Activated CD4-positive, alpha-beta memory T cell treated with anti-CD3 and anti-CD28 coated beads for 36 hours (primary cell): ENCODE measurements at regions of chr1 and their contacts with region 1.

Region 1: GRCh38 chr1:36149237-36149972 is at the start of gene TRAPPC3:
- DNase-seq: peak; percentile 100
- H3K4me3 Mint-ChIP-seq: peak within 1 kb of the TSS; percentile 100
- H3K27ac Mint-ChIP-seq: peak within 1 kb of the TSS; percentile 92
- H3K4me1 Mint-ChIP-seq: peaks cover 67% of the 10 kb centered on the region
- H3K27me3 Mint-ChIP-seq: no peaks in the 10 kb centered on the region
- total RNA-seq, gene TRAPPC3: 56.7 to 56.8 TPM

Region 2: GRCh38 chr1:36115200-36115669 is 34.2 kb before region 1 on chr1:
- CTCF ChIA-PET with region 1: no interaction called
- POLR2A ChIA-PET with region 1: no interaction called
- intact Hi-C with region 1: no loop called
- DNase-seq: no peak
- H3K4me3 Mint-ChIP-seq: no peak overlapping the region
- H3K27ac Mint-ChIP-seq: no peak overlapping the region
- H3K4me1 Mint-ChIP-seq: peaks cover 5% of the 10 kb centered on the region
- H3K27me3 Mint-ChIP-seq: no peaks in the 10 kb centered on the region

Region 3: GRCh38 chr1:36134505-36135329 is 14.7 kb before region 1 on chr1:
- CTCF ChIA-PET with region 1: interaction called, 23 read pairs
- POLR2A ChIA-PET with region 1: interaction called, 4 read pairs
- intact Hi-C with region 1: no loop called
- DNase-seq: peak; percentile 57
- H3K4me3 Mint-ChIP-seq: no peak overlapping the region
- H3K27ac Mint-ChIP-seq: no peak overlapping the region
- H3K4me1 Mint-ChIP-seq: peaks cover 3% of the 10 kb centered on the region
- H3K27me3 Mint-ChIP-seq: no peaks in the 10 kb centered on the region

Region 4: DNA sequence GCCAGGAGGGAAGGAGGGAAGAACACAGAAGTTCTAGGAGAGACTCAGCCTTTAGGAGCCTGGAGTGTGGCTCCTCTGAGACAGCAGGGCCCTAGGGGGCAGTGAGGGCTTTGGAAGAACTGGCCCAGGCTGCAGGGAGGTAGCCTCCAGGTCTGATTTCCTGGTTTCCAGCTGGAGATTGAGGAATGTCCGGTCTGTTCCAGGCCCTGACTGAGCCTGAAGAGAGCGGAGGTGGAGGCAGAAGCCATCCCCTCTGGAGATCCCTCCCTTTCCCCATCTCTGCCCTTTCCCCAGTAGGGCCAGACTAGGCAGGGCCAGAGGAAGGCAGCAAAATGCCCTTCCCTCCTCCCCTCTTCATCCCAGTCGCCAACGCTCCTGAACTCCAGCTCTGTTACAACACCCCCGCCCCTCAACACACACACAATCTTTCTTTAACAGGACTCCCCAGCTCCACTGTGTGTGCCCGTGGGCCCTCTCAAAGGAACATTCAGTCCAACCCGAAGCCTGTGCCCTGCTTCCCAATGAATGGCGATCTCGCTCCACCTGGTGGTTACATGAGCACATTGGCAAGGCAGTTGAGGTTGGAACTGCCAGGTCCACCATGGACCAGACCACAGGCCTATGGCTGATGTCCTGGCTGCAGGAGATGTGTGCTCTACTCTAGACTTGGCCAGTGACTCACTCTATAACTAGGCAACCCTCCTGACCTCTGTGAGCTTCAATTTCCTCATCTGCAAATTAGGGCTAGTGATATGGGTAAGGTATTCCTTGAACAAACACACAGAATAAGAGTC is 38.6 kb after region 1 on chr1:
- CTCF ChIA-PET with region 1: interaction called, 151 read pairs
- POLR2A ChIA-PET with region 1: interaction called, 12 read pairs
- intact Hi-C with region 1: loop called (anchors 1 kb)
- DNase-seq: peak; percentile 89
- H3K4me3 Mint-ChIP-seq: no peak overlapping the region
- H3K27ac Mint-ChIP-seq: peak overlapping the region; percentile 55
- H3K4me1 Mint-ChIP-seq: peaks cover 4% of the 10 kb centered on the region
- H3K27me3 Mint-ChIP-seq: no peaks in the 10 kb centered on the region

Region 5: GRCh38 chr1:36285448-36286101 is 136.2 kb after region 1 on chr1:
- CTCF ChIA-PET with region 1: interaction called, 54 read pairs
- POLR2A ChIA-PET with region 1: interaction called, 3 read pairs
- intact Hi-C with region 1: loop called (anchors 1 kb)
- DNase-seq: peak; percentile 68
- H3K4me3 Mint-ChIP-seq: no peak overlapping the region
- H3K27ac Mint-ChIP-seq: peak overlapping the region; percentile 80
- H3K4me1 Mint-ChIP-seq: peaks cover 36% of the 10 kb centered on the region
- H3K27me3 Mint-ChIP-seq: no peaks in the 10 kb centered on the region

Region 6: DNA sequence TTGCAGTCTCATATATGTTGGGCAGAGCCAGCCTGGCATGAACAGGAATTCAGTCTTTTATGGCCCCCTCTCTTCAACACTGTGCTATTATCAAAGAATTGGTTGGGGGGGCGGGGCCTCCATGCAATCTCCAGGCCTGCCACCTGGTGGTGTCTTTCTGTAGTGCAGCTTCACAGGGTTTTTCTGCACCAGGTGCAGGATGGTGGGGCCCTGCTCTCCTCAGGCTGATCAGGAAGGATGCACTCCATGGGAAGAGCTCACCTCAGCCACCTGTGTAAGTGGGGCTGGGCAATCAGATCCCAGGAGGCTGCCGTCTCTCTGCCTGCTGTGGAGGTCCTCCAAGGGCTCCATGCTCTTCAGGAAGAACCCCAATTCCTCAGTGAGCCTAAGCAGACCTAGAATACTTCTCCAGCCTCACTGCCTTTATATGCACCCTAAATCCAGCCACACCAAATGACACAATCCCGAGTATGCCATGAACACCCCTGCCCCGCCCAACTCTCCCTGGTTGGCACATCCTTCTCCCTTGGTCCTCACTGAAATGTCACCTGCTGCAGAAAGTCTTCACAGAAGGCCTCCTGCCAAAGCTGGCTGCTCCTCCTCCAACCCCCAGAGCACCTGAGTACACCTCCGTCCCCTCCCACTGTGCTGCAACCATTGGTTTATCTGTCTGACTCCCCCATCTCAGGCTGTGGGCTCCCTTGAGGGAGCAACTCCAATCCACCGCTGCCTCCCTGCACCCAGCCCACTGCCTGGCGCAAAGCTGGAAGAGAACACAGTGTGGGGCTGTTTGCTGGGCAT is 219.9 kb after region 1 on chr1:
- CTCF ChIA-PET with region 1: interaction called, 23 read pairs
- POLR2A ChIA-PET with region 1: no interaction called
- intact Hi-C with region 1: loop called (anchors 2 kb)
- DNase-seq: peak; percentile 90
- H3K4me3 Mint-ChIP-seq: no peak overlapping the region
- H3K27ac Mint-ChIP-seq: peak overlapping the region; percentile 62
- H3K4me1 Mint-ChIP-seq: peaks cover 67% of the 10 kb centered on the region
- H3K27me3 Mint-ChIP-seq: no peaks in the 10 kb centered on the region

Region 7: GRCh38 chr1:37474046-37474759 is 1324.8 kb after region 1 on chr1 and contains the start of gene ZC3H12A:
- CTCF ChIA-PET with region 1: interaction called, 3 read pairs
- POLR2A ChIA-PET with region 1: no interaction called
- intact Hi-C with region 1: loop called (anchors 10 kb)
- DNase-seq: peak; percentile 93
- H3K4me3 Mint-ChIP-seq: peak within 1 kb of the TSS; percentile 94
- H3K27ac Mint-ChIP-seq: peak within 1 kb of the TSS; percentile 100
- H3K4me1 Mint-ChIP-seq: peaks cover 37% of the 10 kb centered on the region
- H3K27me3 Mint-ChIP-seq: no peaks in the 10 kb centered on the region
- total RNA-seq, gene ZC3H12A: 39.0 to 40.8 TPM